Esophagus squamous epithelium (tissue), 5 donors: ENCODE measurements at regions of chr2 and their contacts with region 1.

Region 1: GRCh38 chr2:224449212-224450147 is 47.6 kb upstream of the FAM124B start:
- DNase-seq: no peak
- H3K4me3 ChIP-seq: no peak overlapping the region
- H3K27ac ChIP-seq: no peak overlapping the region
- H3K4me1 ChIP-seq: peaks cover 0 to 6% (median 0%) of the 10 kb centered on the region in 3 donors
- H3K27me3 ChIP-seq: no peaks in the 10 kb centered on the region
- CTCF ChIP-seq: peak; percentile 12 to 73 (median 52)
- POLR2A ChIP-seq: no peak

Region 2: GRCh38 chr2:224650815-224651439 is 201.4 kb after region 1 on chr2:
- intact Hi-C with region 1: loop called (anchors 10 kb)
- DNase-seq: no peak
- H3K4me3 ChIP-seq: no peak overlapping the region
- H3K27ac ChIP-seq: no peak overlapping the region
- H3K4me1 ChIP-seq: no peaks in the 10 kb centered on the region
- H3K27me3 ChIP-seq: no peaks in the 10 kb centered on the region
- CTCF ChIP-seq: peak; percentile 56 to 77 (median 70)
- POLR2A ChIP-seq: no peak